Activated CD4-positive, alpha-beta T cell treated with anti-CD3 and anti-CD28 coated beads, Interleukin-2, amount 10 ng/mL, durations not matched to agents 7 days and 5 days (primary cell): ENCODE measurements at regions of chr3 and their contacts with region 1.

Region 1: DNA sequence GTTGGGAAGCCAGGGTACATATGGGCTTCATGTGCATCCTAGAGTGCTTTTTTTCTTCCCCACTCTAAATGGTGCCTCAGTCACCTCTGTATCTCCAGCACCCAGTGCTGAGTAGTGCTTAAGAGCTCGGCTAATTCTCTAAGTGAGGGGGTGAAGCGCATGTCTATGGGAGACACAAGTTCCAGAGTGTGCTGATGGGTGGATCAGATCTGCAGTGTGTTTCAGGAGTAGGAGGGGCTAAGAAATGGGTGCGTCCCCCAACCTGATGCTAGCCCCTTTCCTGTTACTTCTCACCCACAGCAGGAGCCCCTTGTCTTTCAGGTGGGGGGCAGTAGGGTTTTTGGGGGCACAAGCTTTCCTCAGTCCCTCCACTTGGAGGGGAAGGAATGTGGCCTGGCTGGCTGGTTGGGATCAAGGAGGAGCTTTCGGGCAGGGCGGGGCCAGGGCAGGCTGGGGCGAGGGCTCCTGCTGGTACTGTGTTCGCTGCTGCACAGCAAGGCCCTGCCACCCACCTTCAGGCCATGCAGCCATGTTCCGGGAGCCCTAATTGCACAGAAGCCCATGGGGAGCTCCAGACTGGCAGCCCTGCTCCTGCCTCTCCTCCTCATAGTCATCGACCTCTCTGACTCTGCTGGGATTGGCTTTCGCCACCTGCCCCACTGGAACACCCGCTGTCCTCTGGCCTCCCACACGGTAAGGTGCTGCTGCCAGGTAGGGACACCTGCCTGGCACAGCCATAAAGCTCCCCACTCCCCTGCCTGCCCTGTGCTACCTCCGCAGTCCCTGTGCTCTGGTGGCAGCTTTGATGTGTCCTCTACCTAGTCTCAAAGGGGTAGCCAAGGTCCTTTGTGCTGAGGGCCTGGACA is at the start of gene IL17RE:
- DNase-seq: no peak
- H3K4me3 Mint-ChIP-seq: peak within 1 kb of the TSS; percentile 22
- H3K27ac Mint-ChIP-seq: peak within 1 kb of the TSS; percentile 66
- H3K4me1 Mint-ChIP-seq: peaks cover 31% of the 10 kb centered on the region
- H3K27me3 Mint-ChIP-seq: no peaks in the 10 kb centered on the region
- total RNA-seq, gene IL17RE: 1.5 to 2.7 TPM

Region 2: DNA sequence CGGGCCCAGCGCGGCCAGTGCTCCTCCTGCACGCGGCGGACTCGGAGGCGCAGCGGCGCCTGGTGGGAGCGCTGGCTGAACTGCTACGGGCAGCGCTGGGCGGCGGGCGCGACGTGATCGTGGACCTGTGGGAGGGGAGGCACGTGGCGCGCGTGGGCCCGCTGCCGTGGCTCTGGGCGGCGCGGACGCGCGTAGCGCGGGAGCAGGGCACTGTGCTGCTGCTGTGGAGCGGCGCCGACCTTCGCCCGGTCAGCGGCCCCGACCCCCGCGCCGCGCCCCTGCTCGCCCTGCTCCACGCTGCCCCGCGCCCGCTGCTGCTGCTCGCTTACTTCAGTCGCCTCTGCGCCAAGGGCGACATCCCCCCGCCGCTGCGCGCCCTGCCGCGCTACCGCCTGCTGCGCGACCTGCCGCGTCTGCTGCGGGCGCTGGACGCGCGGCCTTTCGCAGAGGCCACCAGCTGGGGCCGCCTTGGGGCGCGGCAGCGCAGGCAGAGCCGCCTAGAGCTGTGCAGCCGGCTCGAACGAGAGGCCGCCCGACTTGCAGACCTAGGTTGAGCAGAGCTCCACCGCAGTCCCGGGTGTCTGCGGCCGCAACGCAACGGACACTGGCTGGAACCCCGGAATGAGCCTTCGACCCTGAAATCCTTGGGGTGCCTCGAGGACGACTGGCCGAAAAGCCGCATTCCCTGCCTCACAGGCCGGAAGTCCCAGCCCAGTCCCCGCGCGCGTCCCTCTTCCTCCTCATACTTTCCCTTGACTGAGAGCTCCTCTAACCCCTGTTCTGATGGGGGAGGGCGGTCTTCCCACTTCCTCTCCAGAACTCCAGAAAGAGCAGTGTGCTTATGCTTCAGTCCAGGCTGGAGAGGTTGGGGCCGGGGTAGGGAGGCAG is 12.9 kb after region 1 on chr3:
- CTCF ChIA-PET with region 1: interaction called, 13 read pairs
- POLR2A ChIA-PET with region 1: no interaction called
- DNase-seq: peak; percentile 16
- H3K4me3 Mint-ChIP-seq: peak overlapping the region; percentile 64
- H3K27ac Mint-ChIP-seq: no peak overlapping the region
- H3K4me1 Mint-ChIP-seq: peaks cover 16% of the 10 kb centered on the region
- H3K27me3 Mint-ChIP-seq: peaks cover 6% of the 10 kb centered on the region